GM10248 (cell line): ENCODE measurements at regions of chr3 and their contacts with region 1.

Region 1: GRCh38 chr3:123054931-123055330 is 11.9 kb upstream of the PDIA5 start:
- DNase-seq: no peak
- CTCF ChIP-seq: no peak

Region 2: GRCh38 chr3:123066896-123067688 is 12.2 kb after region 1 on chr3 and contains the start of gene PDIA5:
- CTCF ChIA-PET with region 1: interaction called, 10 read pairs
- POLR2A ChIA-PET with region 1: no interaction called
- DNase-seq: peak; percentile 90
- CTCF ChIP-seq: no peak